ENCODE measurements at regions of chr20 and their contacts with region 1.

Region 1: GRCh38 chr20:2523919-2524708 is 12.3 kb upstream of the TMC2 start:
- DNase-seq: peak; percentile 77
- ATAC-seq: peak; percentile 81
- H3K4me3 ChIP-seq: peak overlapping the region; percentile 80 to 88 (median 80)
- H3K27ac ChIP-seq: peak overlapping the region; percentile 22
- H3K4me1 ChIP-seq: peaks cover 24% of the 10 kb centered on the region
- H3K27me3 ChIP-seq: peaks cover 0 to 36% of the 10 kb centered on the region in 2 experiments; a peak in 2 of 5 replicates
- CTCF ChIP-seq: peak; percentile 99
- EP300 ChIP-seq: no peak; a peak in 1 of 4 replicates
- POLR2A ChIP-seq: peak; percentile 62 to 76
- RAD21 ChIP-seq: peak; percentile 76

Region 2: GRCh38 chr20:2476742-2477615 is 47.1 kb before region 1 on chr20:
- CTCF ChIA-PET with region 1: no interaction called
- POLR2A ChIA-PET with region 1: interaction called, 5 read pairs
- in situ Hi-C with region 1: no loop called
- intact Hi-C with region 1: loop called (anchors 2 kb)
- DNase-seq: peak; percentile 60
- ATAC-seq: peak; percentile 76
- H3K4me3 ChIP-seq: no peak overlapping the region
- H3K27ac ChIP-seq: peak overlapping the region; percentile 54
- H3K4me1 ChIP-seq: peaks cover 28% of the 10 kb centered on the region
- H3K27me3 ChIP-seq: no peaks in the 10 kb centered on the region
- CTCF ChIP-seq: peak; percentile 80
- EP300 ChIP-seq: no peak
- POLR2A ChIP-seq: no peak
- RAD21 ChIP-seq: no peak

Region 3: DNA sequence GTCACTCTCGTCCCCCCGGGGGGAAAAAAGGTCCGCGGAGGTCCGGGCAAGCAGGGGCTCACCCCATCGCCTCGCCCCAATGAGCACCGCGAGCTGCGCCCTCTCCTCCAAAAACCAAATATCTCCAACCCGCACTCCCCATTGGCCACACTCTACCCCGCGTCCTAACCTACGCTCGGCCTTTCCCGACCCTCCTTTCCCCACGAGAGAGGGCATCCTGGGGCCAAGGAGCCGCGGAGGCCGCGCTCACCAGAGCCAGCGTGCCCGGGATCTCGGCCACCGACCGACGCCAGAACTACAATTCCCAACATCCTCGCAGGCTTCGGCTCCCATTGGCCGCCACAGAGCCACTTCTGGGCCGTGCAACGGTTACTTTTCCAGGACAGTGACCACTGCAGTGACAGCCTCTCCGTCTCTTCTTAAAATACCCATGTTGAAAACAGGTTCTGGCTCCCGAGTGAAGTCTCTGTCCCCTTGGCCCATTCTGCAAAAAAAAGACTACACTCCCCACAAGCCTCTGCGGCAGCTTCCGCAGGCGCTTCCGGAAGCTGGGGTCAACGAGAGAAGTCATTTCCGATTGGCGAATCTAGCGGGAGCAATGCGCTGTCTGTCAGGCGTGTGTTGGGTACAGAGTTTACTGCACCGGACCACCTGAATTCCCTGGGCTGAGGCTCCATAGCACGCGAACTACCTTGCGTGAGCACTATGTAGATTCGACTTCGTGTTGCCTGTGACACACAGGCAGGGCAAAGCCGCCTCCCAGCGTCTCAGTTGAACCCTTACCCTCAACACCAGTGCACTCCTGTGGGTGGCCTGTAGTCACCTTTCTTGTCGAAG is 15.3 kb before region 1 on chr20 and contains the start of gene ZNF343:
- CTCF ChIA-PET with region 1: interaction called, 3 read pairs
- POLR2A ChIA-PET with region 1: interaction called, 19 read pairs
- in situ Hi-C with region 1: no loop called
- intact Hi-C with region 1: no loop called
- DNase-seq: peak; percentile 95
- ATAC-seq: peak; percentile 98
- H3K4me3 ChIP-seq: peak within 1 kb of the TSS; percentile 88 to 96 (median 91)
- H3K27ac ChIP-seq: peak within 1 kb of the TSS; percentile 79
- H3K4me1 ChIP-seq: peaks cover 23% of the 10 kb centered on the region
- H3K27me3 ChIP-seq: peaks cover 2 to 5% of the 10 kb centered on the region in 2 experiments; a peak in 3 of 5 replicates
- CTCF ChIP-seq: peak; percentile 44
- EP300 ChIP-seq: no peak; a peak in 1 of 4 replicates
- POLR2A ChIP-seq: peak; percentile 94 to 95
- RAD21 ChIP-seq: peak; percentile 33; the same call in 1 of the 2 replicates
- total RNA-seq, gene ZNF343: 22.1 and 28.8 TPM in 2 replicates

Region 4: GRCh38 chr20:2671977-2672376 is 147.9 kb after region 1 on chr20:
- CTCF ChIA-PET with region 1: interaction called, 9 read pairs
- POLR2A ChIA-PET with region 1: no interaction called
- in situ Hi-C with region 1: no loop called
- intact Hi-C with region 1: loop called (anchors 2 kb)
- DNase-seq: no peak
- ATAC-seq: peak; percentile 53
- H3K4me3 ChIP-seq: no peak overlapping the region
- H3K27ac ChIP-seq: no peak overlapping the region
- H3K4me1 ChIP-seq: no peaks in the 10 kb centered on the region
- H3K27me3 ChIP-seq: peaks cover 0 to 38% of the 10 kb centered on the region in 2 experiments; a peak in 3 of 5 replicates
- CTCF ChIP-seq: peak; percentile 50
- EP300 ChIP-seq: no peak
- POLR2A ChIP-seq: no peak
- RAD21 ChIP-seq: no peak

Region 5: DNA sequence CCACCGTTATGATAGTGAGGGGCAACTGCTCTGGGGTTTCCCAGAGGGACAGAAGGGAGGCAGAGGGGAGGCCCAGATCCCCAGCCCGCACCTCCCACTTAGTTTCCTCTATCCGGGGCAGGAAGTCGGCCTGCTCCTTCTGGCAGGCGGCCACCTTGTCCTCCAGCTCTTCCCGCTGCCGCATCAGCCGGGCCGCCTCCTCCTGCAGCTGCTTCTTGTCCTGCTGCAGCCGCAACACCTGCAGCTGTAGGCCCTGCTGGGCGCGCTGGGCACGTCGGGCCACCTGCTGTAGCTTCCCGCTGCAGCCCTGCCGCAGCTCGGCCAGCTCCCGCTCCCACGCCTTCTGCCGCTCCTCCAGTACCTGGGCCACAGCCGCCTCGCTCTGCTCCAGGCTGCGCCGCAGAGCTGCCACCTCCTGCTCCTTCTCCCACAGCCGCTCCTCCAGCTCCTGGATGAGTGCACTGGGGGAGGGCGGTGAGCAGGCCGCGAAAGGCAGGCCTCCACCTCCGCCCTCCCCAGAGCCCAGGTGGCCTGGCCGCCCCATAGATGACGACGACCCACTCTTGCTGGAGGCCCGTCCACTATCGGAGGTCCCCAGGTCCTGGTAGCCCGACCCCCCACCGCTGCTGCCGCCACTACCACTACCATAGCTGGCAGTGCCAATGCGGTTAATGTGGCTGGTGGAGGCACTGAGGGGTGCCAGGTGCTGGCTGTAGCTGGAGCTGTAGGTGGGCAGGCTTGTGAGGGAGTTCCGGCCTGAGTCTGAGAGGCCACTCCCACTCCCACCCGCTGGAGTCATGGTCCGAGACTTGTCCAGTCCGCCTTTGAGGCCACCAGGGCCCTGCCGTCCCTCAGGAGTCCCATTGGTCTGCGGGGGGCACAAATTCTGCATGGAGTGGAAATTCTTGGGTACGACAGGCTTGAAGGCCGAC is 641.6 kb after region 1 on chr20:
- CTCF ChIA-PET with region 1: no interaction called
- POLR2A ChIA-PET with region 1: no interaction called
- in situ Hi-C with region 1: no loop called
- intact Hi-C with region 1: no loop called
- DNase-seq: no peak
- ATAC-seq: no peak
- H3K4me3 ChIP-seq: no peak overlapping the region
- H3K27ac ChIP-seq: no peak overlapping the region
- H3K4me1 ChIP-seq: peaks cover 68% of the 10 kb centered on the region
- H3K27me3 ChIP-seq: no peaks in the 10 kb centered on the region
- CTCF ChIP-seq: no peak
- EP300 ChIP-seq: no peak
- POLR2A ChIP-seq: no peak
- RAD21 ChIP-seq: no peak